Activated T-helper 1 cell treated with anti-CD3 and anti-CD28 coated beads, Interleukin-12 subunit alpha, Interleukin-12 subunit beta, Interleukin-2, Interleukin-4 antibody, amounts not matched to agents 30 ng/mL and 10 ng/mL and 1 ng/mL, durations not matched to agents 14 hours and 24 hours and 36 hours (primary cell): ENCODE measurements at regions of chr17 and their contacts with region 1.

Region 1: GRCh38 chr17:44324571-44325275 is at the start of gene SLC25A39:
- DNase-seq: peak; percentile 96
- H3K4me3 Mint-ChIP-seq: peak within 1 kb of the TSS; percentile 93
- H3K27ac Mint-ChIP-seq: peak within 1 kb of the TSS; percentile 97
- H3K4me1 Mint-ChIP-seq: peaks cover 10% of the 10 kb centered on the region
- H3K27me3 Mint-ChIP-seq: no peaks in the 10 kb centered on the region
- total RNA-seq, gene SLC25A39: 169 and 180 TPM in 2 replicates

Region 2: DNA sequence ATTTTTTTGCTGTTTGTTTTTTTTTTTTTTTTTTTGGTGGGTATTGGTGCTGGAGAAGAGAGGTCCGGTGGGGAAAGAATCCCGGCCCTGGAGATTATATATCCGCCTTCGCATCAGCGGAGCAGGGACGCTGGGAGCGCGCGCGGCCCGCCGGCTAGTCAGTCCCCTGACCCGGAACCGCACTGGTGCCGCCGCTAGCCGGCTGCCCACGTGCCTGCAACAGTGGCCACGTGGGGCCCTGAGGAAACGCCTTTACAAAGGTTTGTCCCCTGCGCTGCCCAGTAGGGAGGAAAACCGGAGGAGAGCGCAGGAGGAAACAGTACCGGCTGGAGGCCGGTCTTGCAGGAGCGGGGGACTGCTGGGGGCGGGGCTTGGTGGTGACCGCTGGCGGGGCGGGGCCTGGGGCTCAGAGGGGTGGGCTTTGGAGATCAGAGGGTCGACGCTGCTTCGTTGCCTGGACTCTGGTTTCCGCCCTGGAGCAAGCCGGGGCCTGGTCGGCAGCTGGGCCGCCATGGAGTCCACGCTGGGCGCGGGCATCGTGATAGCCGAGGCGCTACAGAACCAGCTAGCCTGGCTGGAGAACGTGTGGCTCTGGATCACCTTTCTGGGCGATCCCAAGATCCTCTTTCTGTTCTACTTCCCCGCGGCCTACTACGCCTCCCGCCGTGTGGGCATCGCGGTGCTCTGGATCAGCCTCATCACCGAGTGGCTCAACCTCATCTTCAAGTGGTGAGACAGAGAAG is 254.1 kb before region 1 on chr17 and contains the start of gene G6PC3:
- intact Hi-C with region 1: loop called (anchors 10 kb)
- DNase-seq: peak; percentile 78
- H3K4me3 Mint-ChIP-seq: peak within 1 kb of the TSS; percentile 98
- H3K27ac Mint-ChIP-seq: peak within 1 kb of the TSS; percentile 99
- H3K4me1 Mint-ChIP-seq: peaks cover 16% of the 10 kb centered on the region
- H3K27me3 Mint-ChIP-seq: no peaks in the 10 kb centered on the region
- total RNA-seq, gene G6PC3: 33.5 and 34.9 TPM in 2 replicates

Region 3: DNA sequence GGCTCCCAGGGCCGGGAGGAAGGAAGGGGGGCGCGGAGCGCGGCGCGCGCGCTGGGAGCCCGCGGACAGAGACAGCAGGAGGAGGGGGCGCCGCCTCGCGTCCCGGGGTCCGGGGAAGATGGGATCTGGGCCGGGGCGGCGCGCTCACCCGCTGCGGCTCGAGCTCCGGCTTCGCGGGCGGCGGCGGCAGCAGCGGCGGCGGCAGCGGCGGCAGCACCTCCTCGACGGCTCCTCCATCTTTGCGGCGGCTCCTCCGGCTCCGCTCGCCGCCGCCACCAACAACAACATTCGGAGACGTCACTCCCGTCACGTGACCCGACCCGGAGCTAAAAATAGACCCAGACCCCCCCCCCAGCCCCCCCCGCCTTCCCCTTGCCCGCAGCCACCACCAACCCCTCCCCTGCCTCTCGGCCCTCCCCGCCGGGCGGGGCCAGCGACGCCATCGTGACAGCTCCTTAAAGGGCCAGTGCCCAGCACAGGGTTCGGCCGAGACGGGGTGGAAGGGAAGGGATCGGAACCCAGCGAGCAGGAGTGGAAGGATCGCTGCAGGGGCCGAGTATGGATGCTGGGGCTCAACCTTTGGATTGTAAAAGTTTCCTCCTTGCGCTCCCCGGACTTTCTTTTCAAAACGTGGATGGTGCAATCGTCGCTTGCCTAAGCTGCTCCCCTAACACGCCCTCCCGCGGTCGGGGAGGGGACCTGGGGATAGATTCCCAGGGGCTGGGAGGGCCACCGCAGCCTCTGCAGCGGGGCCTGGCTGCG is 201.2 kb before region 1 on chr17 and contains the start of gene HDAC5:
- intact Hi-C with region 1: loop called (anchors 5 kb)
- DNase-seq: peak; percentile 92
- H3K4me3 Mint-ChIP-seq: peak within 1 kb of the TSS; percentile 91
- H3K27ac Mint-ChIP-seq: peak within 1 kb of the TSS; percentile 96
- H3K4me1 Mint-ChIP-seq: peaks cover 25% of the 10 kb centered on the region
- H3K27me3 Mint-ChIP-seq: peaks cover 12% of the 10 kb centered on the region
- total RNA-seq, gene HDAC5: 20.6 and 22.8 TPM in 2 replicates

Region 4: DNA sequence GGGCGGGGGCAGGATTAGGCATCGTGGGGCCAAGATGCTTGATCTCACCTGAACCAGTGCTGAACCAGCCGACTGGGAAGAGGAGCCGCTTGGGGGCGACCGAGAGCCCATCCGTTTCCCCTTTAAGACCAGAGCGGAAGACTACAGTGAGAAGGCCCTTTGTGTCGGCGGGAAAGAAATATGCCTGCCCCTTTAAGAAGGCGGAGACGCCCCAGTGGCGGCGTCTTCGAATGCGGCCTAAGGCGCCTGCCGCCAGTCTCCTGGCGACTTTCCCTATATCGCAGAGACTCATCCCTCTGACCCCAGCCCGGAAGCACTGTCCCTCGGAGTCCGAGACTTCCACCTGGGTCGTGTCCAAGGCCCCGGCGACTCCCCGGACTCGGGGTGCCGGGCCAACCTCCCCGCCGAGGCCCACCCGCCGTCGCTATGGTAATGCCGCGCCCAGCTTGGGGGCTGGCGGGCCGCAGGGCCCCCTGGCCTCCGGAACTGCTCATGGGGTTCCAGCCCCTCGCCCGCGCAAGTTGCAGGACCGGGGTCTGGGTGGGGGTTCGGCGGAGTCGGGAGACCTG is 182.9 kb before region 1 on chr17 and contains the start of gene HROB:
- intact Hi-C with region 1: loop called (anchors 2 kb)
- DNase-seq: peak; percentile 97
- H3K4me3 Mint-ChIP-seq: peak within 1 kb of the TSS; percentile 95
- H3K27ac Mint-ChIP-seq: peak within 1 kb of the TSS; percentile 95
- H3K4me1 Mint-ChIP-seq: peaks cover 16% of the 10 kb centered on the region
- H3K27me3 Mint-ChIP-seq: no peaks in the 10 kb centered on the region
- total RNA-seq, gene HROB: 23.0 and 23.1 TPM in 2 replicates

Region 5: GRCh38 chr17:44199553-44200477 is 124.9 kb before region 1 on chr17 and contains the start of gene ATXN7L3:
- intact Hi-C with region 1: loop called (anchors 1 kb)
- DNase-seq: peak; percentile 97
- H3K4me3 Mint-ChIP-seq: peak within 1 kb of the TSS; percentile 94
- H3K27ac Mint-ChIP-seq: peak within 1 kb of the TSS; percentile 90
- H3K4me1 Mint-ChIP-seq: peaks cover 48% of the 10 kb centered on the region
- H3K27me3 Mint-ChIP-seq: no peaks in the 10 kb centered on the region
- total RNA-seq, gene ATXN7L3: 125 and 126 TPM in 2 replicates

Region 6: GRCh38 chr17:44218344-44219107 is 106.2 kb before region 1 on chr17:
- intact Hi-C with region 1: loop called (anchors 1 kb)
- DNase-seq: peak; percentile 86
- H3K4me3 Mint-ChIP-seq: peak overlapping the region; percentile 98
- H3K27ac Mint-ChIP-seq: peak overlapping the region; percentile 96
- H3K4me1 Mint-ChIP-seq: peaks cover 45% of the 10 kb centered on the region
- H3K27me3 Mint-ChIP-seq: no peaks in the 10 kb centered on the region

Region 7: DNA sequence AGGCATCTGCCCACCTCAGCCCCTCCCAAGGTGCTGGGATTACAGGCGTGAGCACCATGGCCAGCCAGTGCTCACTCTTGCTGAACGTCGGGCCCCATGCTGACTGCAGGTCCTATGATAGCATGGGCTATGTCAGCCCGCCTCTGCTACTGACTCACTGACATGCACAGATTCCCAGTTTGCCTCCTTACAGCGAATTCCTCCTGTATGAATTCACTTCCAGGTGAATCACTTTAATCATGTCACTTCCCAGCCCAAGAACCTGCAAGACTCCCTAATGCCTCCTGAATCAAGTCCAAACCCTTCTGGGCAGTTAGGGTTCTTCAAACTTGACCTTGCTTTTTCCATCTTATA is 89.2 kb before region 1 on chr17:
- intact Hi-C with region 1: no loop called
- DNase-seq: no peak
- H3K4me3 Mint-ChIP-seq: no peak overlapping the region
- H3K27ac Mint-ChIP-seq: no peak overlapping the region
- H3K4me1 Mint-ChIP-seq: peaks cover 7% of the 10 kb centered on the region
- H3K27me3 Mint-ChIP-seq: peaks cover 10% of the 10 kb centered on the region

Region 8: GRCh38 chr17:44308320-44308818 is 16.4 kb before region 1 on chr17 and contains the start of gene RUNDC3A:
- intact Hi-C with region 1: loop called (anchors 1 kb)
- DNase-seq: peak; percentile 79
- H3K4me3 Mint-ChIP-seq: peak within 1 kb of the TSS; percentile 57
- H3K27ac Mint-ChIP-seq: no peak within 1 kb of the TSS
- H3K4me1 Mint-ChIP-seq: no peaks in the 10 kb centered on the region
- H3K27me3 Mint-ChIP-seq: peaks cover 28% of the 10 kb centered on the region
- total RNA-seq, gene RUNDC3A: 0.13 and 0.22 TPM in 2 replicates